Activated CD4-positive, alpha-beta memory T cell treated with anti-CD3 and anti-CD28 coated beads for 36 hours (primary cell): ENCODE measurements at regions of chr3 and their contacts with region 1.

Region 1: GRCh38 chr3:56988458-56989168 is 71.9 kb upstream of the SPATA12 start:
- DNase-seq: peak; percentile 78
- H3K4me3 Mint-ChIP-seq: no peak overlapping the region
- H3K27ac Mint-ChIP-seq: no peak overlapping the region
- H3K4me1 Mint-ChIP-seq: peaks cover 19% of the 10 kb centered on the region
- H3K27me3 Mint-ChIP-seq: peaks cover 14% of the 10 kb centered on the region

Region 2: GRCh38 chr3:56556908-56557830 is 431.4 kb before region 1 on chr3 and contains the start of gene CCDC66:
- CTCF ChIA-PET with region 1: no interaction called
- POLR2A ChIA-PET with region 1: no interaction called
- intact Hi-C with region 1: loop called (anchors 5 kb)
- DNase-seq: peak; percentile 96
- H3K4me3 Mint-ChIP-seq: peak within 1 kb of the TSS; percentile 87
- H3K27ac Mint-ChIP-seq: peak within 1 kb of the TSS; percentile 92
- H3K4me1 Mint-ChIP-seq: peaks cover 24% of the 10 kb centered on the region
- H3K27me3 Mint-ChIP-seq: no peaks in the 10 kb centered on the region
- total RNA-seq, gene CCDC66: 21.0 to 29.4 TPM

Region 3: GRCh38 chr3:56711344-56711743 is 277.3 kb before region 1 on chr3:
- CTCF ChIA-PET with region 1: interaction called, 244 read pairs
- POLR2A ChIA-PET with region 1: no interaction called
- intact Hi-C with region 1: no loop called
- DNase-seq: no peak
- H3K4me3 Mint-ChIP-seq: no peak overlapping the region
- H3K27ac Mint-ChIP-seq: no peak overlapping the region
- H3K4me1 Mint-ChIP-seq: peaks cover 3% of the 10 kb centered on the region
- H3K27me3 Mint-ChIP-seq: no peaks in the 10 kb centered on the region

Region 4: GRCh38 chr3:56790016-56790821 is 198.4 kb before region 1 on chr3:
- CTCF ChIA-PET with region 1: interaction called, 23 read pairs
- POLR2A ChIA-PET with region 1: no interaction called
- intact Hi-C with region 1: no loop called
- DNase-seq: peak; percentile 41
- H3K4me3 Mint-ChIP-seq: peak overlapping the region; percentile 8
- H3K27ac Mint-ChIP-seq: peak overlapping the region; percentile 81
- H3K4me1 Mint-ChIP-seq: peaks cover 82% of the 10 kb centered on the region
- H3K27me3 Mint-ChIP-seq: no peaks in the 10 kb centered on the region

Region 5: GRCh38 chr3:56819016-56819809 is 169.4 kb before region 1 on chr3:
- CTCF ChIA-PET with region 1: interaction called, 38 read pairs
- POLR2A ChIA-PET with region 1: no interaction called
- intact Hi-C with region 1: no loop called
- DNase-seq: no peak
- H3K4me3 Mint-ChIP-seq: no peak overlapping the region
- H3K27ac Mint-ChIP-seq: no peak overlapping the region
- H3K4me1 Mint-ChIP-seq: peaks cover 57% of the 10 kb centered on the region
- H3K27me3 Mint-ChIP-seq: no peaks in the 10 kb centered on the region

Region 6: GRCh38 chr3:56855856-56856512 is 132.6 kb before region 1 on chr3:
- CTCF ChIA-PET with region 1: interaction called, 24 read pairs
- POLR2A ChIA-PET with region 1: interaction called, 3 read pairs
- intact Hi-C with region 1: loop called (anchors 2 kb)
- DNase-seq: peak; percentile 64
- H3K4me3 Mint-ChIP-seq: no peak overlapping the region
- H3K27ac Mint-ChIP-seq: no peak overlapping the region
- H3K4me1 Mint-ChIP-seq: peaks cover 55% of the 10 kb centered on the region
- H3K27me3 Mint-ChIP-seq: no peaks in the 10 kb centered on the region

Region 7: GRCh38 chr3:56960234-56960917 is 28.2 kb before region 1 on chr3:
- CTCF ChIA-PET with region 1: interaction called, 14 read pairs
- POLR2A ChIA-PET with region 1: no interaction called
- intact Hi-C with region 1: no loop called
- DNase-seq: peak; percentile 46
- H3K4me3 Mint-ChIP-seq: peak overlapping the region; percentile 40
- H3K27ac Mint-ChIP-seq: no peak overlapping the region
- H3K4me1 Mint-ChIP-seq: peaks cover 18% of the 10 kb centered on the region
- H3K27me3 Mint-ChIP-seq: no peaks in the 10 kb centered on the region